Activated naive CD4-positive, alpha-beta T cell treated with anti-CD3 and anti-CD28 coated beads for 36 hours (primary cell): ENCODE measurements at regions of chr14 and their contacts with region 1.

Region 1: DNA sequence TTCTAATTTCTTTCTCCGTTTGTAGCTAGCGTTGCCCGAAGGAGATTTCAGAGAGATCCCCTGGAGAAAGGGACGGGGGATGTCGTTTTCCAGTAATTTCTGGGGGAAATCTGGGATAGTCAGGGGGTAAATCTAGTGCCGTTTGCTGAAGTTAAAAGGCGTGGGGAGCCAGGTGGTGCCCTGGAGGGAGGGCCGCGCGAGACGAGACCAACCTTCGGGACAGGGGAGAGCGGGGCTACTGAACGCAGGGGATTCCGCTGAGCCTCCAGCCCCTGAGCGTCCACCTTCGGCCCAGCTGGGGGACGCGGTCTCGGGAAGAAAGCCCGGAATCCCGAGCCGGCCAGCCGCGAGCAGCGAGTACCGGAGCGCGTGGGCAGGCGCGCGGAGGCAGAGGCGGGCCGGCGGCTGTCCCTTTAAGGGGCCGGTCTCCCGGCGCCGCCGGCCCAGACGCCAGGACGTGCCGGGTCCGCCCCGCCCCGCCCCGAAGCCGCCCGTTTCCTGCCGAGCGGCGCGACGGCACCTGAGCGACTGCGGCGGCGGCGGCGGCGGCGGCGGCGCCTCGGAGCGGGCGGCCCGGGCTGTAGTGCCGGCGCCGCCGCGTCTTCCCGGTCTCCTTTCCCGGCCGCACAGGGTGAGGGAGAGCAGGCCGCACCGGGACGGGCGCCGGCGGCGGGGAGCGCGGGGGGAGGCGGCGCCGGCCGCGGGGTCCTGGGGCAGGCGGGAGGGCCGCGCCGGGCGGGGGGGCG is at the start of gene KTN1:
- DNase-seq: peak; percentile 84
- H3K4me3 Mint-ChIP-seq: peak within 1 kb of the TSS; percentile 94
- H3K27ac Mint-ChIP-seq: peak within 1 kb of the TSS; percentile 84
- H3K4me1 Mint-ChIP-seq: peaks cover 30% of the 10 kb centered on the region
- H3K27me3 Mint-ChIP-seq: no peaks in the 10 kb centered on the region
- total RNA-seq, gene KTN1: 90.0 to 94.1 TPM

Region 2: GRCh38 chr14:55026793-55027561 is 552.9 kb before region 1 on chr14 and contains the starts of genes SOCS4 and WDHD1:
- CTCF ChIA-PET with region 1: no interaction called
- intact Hi-C with region 1: loop called (anchors 2 kb)
- DNase-seq: peak; percentile 97
- H3K4me3 Mint-ChIP-seq: peak within 1 kb of the TSS; percentile 96
- H3K27ac Mint-ChIP-seq: peak within 1 kb of the TSS; percentile 92
- H3K4me1 Mint-ChIP-seq: peaks cover 46% of the 10 kb centered on the region
- H3K27me3 Mint-ChIP-seq: no peaks in the 10 kb centered on the region
- total RNA-seq, gene SOCS4: 17.7 to 17.9 TPM
- total RNA-seq, gene WDHD1: 61.1 to 62.9 TPM

Region 3: GRCh38 chr14:55191203-55192053 is 388.5 kb before region 1 on chr14 and contains the start of gene DLGAP5:
- CTCF ChIA-PET with region 1: no interaction called
- intact Hi-C with region 1: loop called (anchors 1 kb)
- DNase-seq: peak; percentile 97
- H3K4me3 Mint-ChIP-seq: peak within 1 kb of the TSS; percentile 99
- H3K27ac Mint-ChIP-seq: peak within 1 kb of the TSS; percentile 89
- H3K4me1 Mint-ChIP-seq: peaks cover 26% of the 10 kb centered on the region
- H3K27me3 Mint-ChIP-seq: peaks cover 2% of the 10 kb centered on the region
- total RNA-seq, gene DLGAP5: 117 to 120 TPM

Region 4: GRCh38 chr14:55454264-55455002 is 125.5 kb before region 1 on chr14:
- CTCF ChIA-PET with region 1: no interaction called
- intact Hi-C with region 1: loop called (anchors 5 kb)
- DNase-seq: no peak
- H3K4me3 Mint-ChIP-seq: no peak overlapping the region
- H3K27ac Mint-ChIP-seq: no peak overlapping the region
- H3K4me1 Mint-ChIP-seq: peaks cover 8% of the 10 kb centered on the region
- H3K27me3 Mint-ChIP-seq: no peaks in the 10 kb centered on the region

Region 5: DNA sequence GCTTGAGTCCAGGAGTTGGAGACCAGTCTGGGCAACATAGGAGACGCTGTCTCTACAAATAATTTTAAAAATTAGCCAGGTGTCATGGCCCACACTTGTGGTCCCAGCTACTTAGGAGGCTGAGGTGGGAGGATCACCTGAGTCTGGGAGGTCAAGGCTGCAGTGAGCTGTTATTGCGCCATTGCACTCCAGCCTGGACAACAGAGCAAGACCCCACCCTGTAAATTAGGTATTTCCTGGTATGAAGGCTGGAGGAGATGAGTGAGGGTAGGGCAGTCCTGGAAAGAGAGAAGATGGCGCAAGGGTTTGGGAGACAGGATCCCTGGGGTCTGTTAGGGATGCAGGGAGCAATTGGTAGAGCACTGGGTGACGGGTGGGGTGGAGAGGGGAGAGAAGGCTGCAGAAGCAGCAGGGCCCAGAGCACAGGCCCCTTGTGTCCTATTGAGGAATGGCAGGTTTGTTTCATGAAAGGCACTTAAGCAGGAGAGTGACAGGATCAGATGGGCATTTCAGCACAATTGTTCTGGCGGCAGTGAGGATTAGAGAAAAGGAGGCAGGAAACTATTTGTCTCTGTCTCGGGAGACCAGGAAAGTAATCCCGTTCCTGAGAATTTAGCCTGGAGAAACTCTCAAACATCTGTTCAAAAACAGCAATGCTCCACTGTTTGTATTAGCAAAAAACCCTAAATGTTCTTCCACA is 47.1 kb before region 1 on chr14:
- CTCF ChIA-PET with region 1: no interaction called
- intact Hi-C with region 1: no loop called
- DNase-seq: no peak
- H3K4me3 Mint-ChIP-seq: no peak overlapping the region
- H3K27ac Mint-ChIP-seq: no peak overlapping the region
- H3K4me1 Mint-ChIP-seq: no peaks in the 10 kb centered on the region
- H3K27me3 Mint-ChIP-seq: no peaks in the 10 kb centered on the region

Region 6: DNA sequence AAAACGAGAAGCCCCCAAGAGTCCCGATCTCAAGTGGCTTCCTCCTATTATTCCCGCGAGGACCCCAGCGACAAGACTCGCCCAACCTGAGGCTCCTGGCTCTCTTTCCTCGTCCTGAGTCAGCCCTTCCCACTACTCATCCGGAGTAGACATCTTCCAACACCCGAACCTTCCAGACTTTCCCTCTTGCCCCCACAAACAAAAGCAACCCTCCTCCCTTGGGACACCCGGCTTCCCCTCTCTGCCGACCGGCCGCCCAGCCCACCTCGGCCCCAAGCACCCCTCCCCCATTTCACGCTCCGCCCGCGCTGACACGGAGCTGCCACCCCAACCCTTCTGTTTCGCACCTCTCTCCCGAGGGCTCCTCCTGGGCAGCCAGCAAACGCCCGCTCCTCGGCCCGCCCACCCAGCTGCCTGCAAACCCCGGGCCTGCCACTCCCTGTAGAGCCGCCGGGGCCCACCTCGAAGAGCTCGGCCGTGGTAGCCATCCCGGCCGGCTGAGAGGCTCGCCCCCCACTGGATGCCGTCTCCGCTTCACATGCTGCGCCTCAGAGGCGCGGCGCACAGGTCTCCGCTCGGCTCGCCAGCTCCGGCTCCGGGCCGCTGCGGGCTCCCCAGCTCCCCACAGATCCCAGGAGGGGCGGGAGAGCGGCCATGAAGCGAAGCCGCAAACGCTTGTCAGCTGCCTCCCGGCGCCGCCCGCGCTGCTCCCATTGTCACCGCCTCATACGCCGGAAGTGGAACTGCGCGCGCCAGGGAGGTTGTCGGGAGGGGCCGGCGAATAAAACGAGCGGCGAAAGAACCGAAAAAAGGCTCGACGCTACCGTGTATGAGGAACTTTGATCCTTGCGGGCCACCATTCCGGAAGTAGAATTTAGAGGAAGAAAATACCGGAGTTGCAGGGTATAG is 1688.5 kb after region 1 on chr14 and contains the starts of genes AP5M1 and EXOC5:
- CTCF ChIA-PET with region 1: no interaction called
- intact Hi-C with region 1: loop called (anchors 10 kb)
- DNase-seq: peak; percentile 95
- H3K4me3 Mint-ChIP-seq: peak within 1 kb of the TSS; percentile 99
- H3K27ac Mint-ChIP-seq: peak within 1 kb of the TSS; percentile 99
- H3K4me1 Mint-ChIP-seq: peaks cover 57% of the 10 kb centered on the region
- H3K27me3 Mint-ChIP-seq: no peaks in the 10 kb centered on the region
- total RNA-seq, gene AP5M1: 22.8 to 23.3 TPM
- total RNA-seq, gene EXOC5: 65.0 to 68.1 TPM